Right cardiac atrium (tissue), 5 donors: ENCODE measurements at regions of chr11 and their contacts with region 1.

Region 1: DNA sequence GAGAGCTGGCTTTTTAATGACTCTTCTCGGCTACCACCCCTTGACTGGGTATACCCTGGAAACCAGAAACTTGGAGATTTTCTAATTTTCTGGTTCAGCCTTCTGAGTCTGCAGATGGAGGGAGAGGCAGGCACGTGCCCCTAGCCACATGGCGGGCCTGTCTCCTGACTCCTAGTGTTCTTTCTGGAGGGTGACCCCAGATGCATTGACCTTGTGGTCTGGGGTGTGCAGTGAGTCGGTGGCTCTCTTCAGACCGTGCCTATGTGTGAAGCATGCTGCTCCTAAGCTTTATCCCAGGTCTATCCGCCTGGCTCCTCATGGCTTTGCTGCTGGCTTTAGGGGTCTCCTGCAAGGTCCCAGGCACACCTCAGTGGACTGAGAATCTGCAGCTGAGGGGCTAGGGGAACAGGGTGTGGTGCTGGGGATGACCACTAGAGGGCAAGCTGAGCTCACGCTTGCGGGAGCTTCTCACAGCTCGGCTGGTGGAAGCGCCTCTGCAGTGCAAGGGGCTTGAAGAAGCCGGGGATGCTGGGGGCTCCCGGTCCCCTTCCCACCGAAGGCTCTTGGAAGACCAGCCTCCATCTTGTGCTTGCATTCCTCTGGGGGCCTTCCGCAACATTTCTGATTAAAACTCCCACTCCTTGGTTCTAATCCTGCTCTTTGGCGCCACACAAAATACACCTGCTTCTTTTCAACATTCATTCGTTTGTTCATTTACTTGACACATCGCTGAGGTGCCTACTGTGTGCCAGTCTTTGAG is 51.8 kb downstream of the OTOG start:
- DNase-seq: peak; percentile 72 to 87 (median 86)
- ATAC-seq: peak; percentile 75 to 79
- H3K4me3 ChIP-seq: no peak overlapping the region
- H3K27ac ChIP-seq: no peak overlapping the region
- H3K4me1 ChIP-seq: no peaks in the 10 kb centered on the region
- H3K27me3 ChIP-seq: no peaks in the 10 kb centered on the region

Region 2: GRCh38 chr11:17722000-17722643 is 123.2 kb after region 1 on chr11:
- intact Hi-C with region 1: loop called in 3 of 4 experiments (anchors 5 kb)
- DNase-seq: no peak
- ATAC-seq: peak in 1 of 2 donors; percentile 10
- H3K4me3 ChIP-seq: no peak overlapping the region
- H3K27ac ChIP-seq: no peak overlapping the region
- H3K4me1 ChIP-seq: no peaks in the 10 kb centered on the region
- H3K27me3 ChIP-seq: no peaks in the 10 kb centered on the region